Body of pancreas (tissue), 4 donors: ENCODE measurements at regions of chr7 and their contacts with region 1.

Region 1: DNA sequence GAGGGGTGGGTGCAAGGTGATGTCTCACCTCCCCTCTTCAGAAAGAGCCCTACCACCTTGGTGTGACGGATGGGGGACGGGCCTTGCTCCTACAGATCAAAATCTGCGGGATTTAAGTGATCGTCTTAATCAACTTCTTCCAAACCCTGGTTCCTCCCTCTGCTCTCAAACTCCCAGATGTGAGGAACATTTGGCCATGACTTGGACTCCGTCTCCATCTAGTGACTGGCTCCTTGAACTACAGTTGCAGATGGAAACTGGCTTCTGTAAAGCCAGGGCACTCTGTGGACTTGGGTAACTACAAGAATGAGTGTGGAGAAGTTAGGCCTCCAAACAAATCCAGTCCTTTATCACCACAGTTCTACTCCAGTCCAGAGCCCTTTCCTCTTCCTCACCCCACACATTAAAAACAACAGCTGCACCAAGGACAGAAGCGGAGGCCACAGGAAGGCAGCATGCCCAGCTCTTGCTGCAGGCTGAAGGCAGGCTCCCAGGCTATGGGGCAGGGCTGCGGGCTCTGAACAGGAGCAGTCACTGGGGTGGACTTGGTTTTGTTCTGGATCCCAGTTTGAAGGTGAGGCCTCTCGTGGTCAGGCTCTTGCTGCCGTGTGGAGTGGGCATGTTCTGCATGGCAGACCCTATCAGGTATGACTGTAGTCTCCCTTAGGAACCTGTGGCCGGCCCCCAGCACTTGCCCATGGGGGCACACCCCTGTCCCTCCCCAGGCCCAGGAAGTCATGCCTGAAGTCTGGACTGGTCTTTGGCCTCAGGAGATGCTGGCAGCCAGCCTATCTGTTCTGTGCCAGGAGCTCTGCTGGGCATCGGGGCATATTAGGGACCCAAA is 79.4 kb downstream of the VWC2 start:
- DNase-seq: peak; percentile 47 to 64 (median 54)
- ATAC-seq: peak; percentile 88
- H3K4me3 ChIP-seq: no peak overlapping the region
- H3K27ac ChIP-seq: no peak overlapping the region
- H3K4me1 ChIP-seq: no peaks in the 10 kb centered on the region
- H3K27me3 ChIP-seq: no peaks in the 10 kb centered on the region
- CTCF ChIP-seq: peak; percentile 53 to 89 (median 82)
- POLR2A ChIP-seq: no peak

Region 2: DNA sequence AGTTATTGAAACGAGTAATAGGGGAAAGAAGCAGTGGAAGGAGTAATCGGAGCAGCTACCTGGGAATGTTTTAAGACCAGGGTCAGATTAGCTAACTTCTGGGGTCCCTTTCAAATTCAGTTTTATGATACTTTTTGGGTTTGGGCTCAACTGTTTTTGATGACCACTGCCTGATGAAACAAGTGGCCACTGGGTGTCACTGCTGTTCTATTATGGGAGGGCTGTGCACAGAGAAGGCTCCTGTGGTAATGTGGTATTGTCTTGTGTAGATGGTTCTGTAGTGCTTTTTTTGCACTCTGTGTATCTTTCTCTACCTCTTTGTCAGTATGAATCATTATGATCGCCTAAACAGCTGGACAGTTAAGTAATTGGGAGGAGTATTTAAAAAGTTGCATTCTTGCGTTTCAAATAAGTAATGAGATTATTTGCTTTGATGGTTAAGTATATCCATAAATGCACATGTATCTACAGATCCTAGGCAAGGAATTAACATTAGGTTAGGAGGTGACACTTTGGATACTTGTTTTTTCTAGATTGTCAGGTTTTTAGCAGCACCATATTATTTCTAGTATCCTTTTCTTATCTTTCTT is 1553.2 kb before region 1 on chr7:
- intact Hi-C with region 1: loop called (anchors 10 kb)
- DNase-seq: peak; percentile 24 to 58 (median 42)
- ATAC-seq: peak; percentile 67
- H3K4me3 ChIP-seq: no peak overlapping the region
- H3K27ac ChIP-seq: no peak overlapping the region
- H3K4me1 ChIP-seq: no peaks in the 10 kb centered on the region
- H3K27me3 ChIP-seq: no peaks in the 10 kb centered on the region
- CTCF ChIP-seq: peak; percentile 25 to 69 (median 60)
- POLR2A ChIP-seq: no peak